ENCODE measurements at regions of chr7 and their contacts with region 1.

Region 1: GRCh38 chr7:96685353-96685752 is 24.3 kb downstream of the SEM1 start:
- DNase-seq: no peak
- ATAC-seq: peak; percentile 57
- H3K4me3 Mint-ChIP-seq: no peak overlapping the region
- H3K27ac Mint-ChIP-seq: no peak overlapping the region
- H3K4me1 Mint-ChIP-seq: peaks cover 19% of the 10 kb centered on the region
- H3K27me3 Mint-ChIP-seq: no peaks in the 10 kb centered on the region

Region 2: GRCh38 chr7:96495751-96496216 is 189.6 kb before region 1 on chr7:
- CTCF ChIA-PET with region 1: no interaction called
- POLR2A ChIA-PET with region 1: no interaction called
- intact Hi-C with region 1: loop called in 1 of 2 experiments (anchors 10 kb)
- DNase-seq: peak; percentile 56
- ATAC-seq: peak; percentile 92
- H3K4me3 Mint-ChIP-seq: peak overlapping the region; percentile 27
- H3K27ac Mint-ChIP-seq: peak overlapping the region; percentile 74
- H3K4me1 Mint-ChIP-seq: peaks cover 12% of the 10 kb centered on the region
- H3K27me3 Mint-ChIP-seq: no peaks in the 10 kb centered on the region

Region 3: GRCh38 chr7:96605045-96605716 is 80.2 kb before region 1 on chr7:
- CTCF ChIA-PET with region 1: no interaction called
- POLR2A ChIA-PET with region 1: no interaction called
- intact Hi-C with region 1: no loop called
- DNase-seq: no peak
- ATAC-seq: no peak
- H3K4me3 Mint-ChIP-seq: no peak overlapping the region
- H3K27ac Mint-ChIP-seq: no peak overlapping the region
- H3K4me1 Mint-ChIP-seq: no peaks in the 10 kb centered on the region
- H3K27me3 Mint-ChIP-seq: peaks cover 16% of the 10 kb centered on the region